Activated CD4-positive, alpha-beta T cell treated with anti-CD3 and anti-CD28 coated beads, Interleukin-2, amount 10 ng/mL, durations not matched to agents 24 days and 14 days (primary cell): ENCODE measurements at regions of chr16 and their contacts with region 1.

Region 1: GRCh38 chr16:3787924-3788661 is 70.8 kb upstream of the TRAP1 start:
- DNase-seq: no peak
- H3K4me3 Mint-ChIP-seq: no peak overlapping the region
- H3K27ac Mint-ChIP-seq: no peak overlapping the region
- H3K4me1 Mint-ChIP-seq: peaks cover 33% of the 10 kb centered on the region
- H3K27me3 Mint-ChIP-seq: peaks cover 11% of the 10 kb centered on the region

Region 2: DNA sequence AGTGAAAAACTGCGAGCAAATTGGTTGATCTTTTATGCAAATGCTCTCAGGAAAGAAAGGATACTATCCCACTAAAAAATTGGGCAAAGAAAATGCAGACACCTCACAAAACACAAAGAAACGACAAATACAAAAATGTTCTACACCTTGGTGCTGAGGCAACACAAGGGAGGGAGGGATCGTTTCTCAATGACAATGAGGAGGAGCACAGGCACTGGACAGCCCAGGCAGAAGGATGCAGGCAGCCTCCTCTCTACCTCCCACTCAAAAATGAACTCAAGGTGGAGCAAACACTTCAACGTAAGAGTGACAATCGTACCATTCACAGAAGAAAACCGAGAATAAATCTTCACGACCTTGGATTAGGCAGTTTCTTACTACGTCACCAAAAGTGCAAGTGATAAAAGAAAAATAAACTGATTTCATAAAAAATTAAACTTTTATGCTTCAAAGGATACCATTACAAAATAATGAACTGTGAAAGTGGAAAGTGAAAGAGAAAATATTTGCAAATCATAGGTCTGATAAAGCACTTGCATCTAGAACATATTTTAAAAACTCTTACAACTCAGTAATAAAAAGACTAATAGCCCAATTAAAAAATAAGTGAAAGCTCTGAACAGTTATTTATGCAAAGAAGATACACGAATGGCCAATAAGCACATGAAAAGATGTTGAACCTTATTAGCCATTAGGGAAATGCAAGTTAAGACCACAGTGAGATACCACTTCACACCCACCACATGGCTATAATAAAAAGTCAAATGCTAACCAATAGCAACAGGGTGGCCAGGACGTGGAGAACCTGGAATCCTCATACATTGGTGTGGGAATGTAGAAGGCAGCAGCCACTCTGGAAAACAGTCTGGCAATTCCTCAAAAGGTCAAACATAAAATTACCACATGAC is 10.1 kb after region 1 on chr16:
- intact Hi-C with region 1: loop called (anchors 1 kb)
- DNase-seq: peak; percentile 63
- H3K4me3 Mint-ChIP-seq: peak overlapping the region; percentile 62
- H3K27ac Mint-ChIP-seq: no peak overlapping the region
- H3K4me1 Mint-ChIP-seq: peaks cover 43% of the 10 kb centered on the region
- H3K27me3 Mint-ChIP-seq: peaks cover 2% of the 10 kb centered on the region

Region 3: DNA sequence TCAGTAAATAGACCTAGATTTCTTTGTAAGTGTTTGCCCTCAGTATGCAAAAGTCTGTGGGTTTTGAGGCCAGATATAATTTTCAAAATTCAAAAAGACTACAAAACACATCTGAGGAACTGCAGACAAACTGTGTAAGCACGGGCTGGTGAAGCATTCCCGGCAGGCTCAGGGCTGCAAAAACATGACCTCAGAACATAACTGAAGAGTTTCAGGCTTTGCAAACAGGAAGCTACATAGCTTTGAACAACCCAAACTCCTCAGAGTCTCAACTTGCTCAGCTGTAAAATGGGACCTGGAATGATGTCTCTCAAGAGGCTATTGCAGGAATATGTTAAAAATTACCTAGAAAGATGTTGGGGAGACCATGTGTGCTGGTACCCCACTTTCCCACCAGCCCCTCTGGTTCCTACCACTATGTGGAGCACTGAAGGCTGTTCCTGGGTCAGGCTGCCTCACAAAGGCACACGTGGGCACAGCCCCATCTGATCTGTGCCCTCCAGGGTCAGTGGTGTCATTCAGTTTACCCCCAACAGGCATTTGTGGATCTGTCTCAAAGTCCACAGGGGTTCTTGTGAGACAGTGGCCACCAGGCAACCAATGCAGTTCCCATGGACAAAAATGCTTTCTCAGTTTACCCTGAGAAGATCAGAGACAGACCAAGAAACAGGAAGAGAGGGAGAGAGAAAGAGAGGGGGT is 19.5 kb after region 1 on chr16:
- intact Hi-C with region 1: loop called (anchors 2 kb)
- DNase-seq: peak; percentile 74
- H3K4me3 Mint-ChIP-seq: peak overlapping the region; percentile 75
- H3K27ac Mint-ChIP-seq: peak overlapping the region; percentile 80
- H3K4me1 Mint-ChIP-seq: peaks cover 72% of the 10 kb centered on the region
- H3K27me3 Mint-ChIP-seq: no peaks in the 10 kb centered on the region

Region 4: GRCh38 chr16:3819746-3820724 is 31.9 kb after region 1 on chr16:
- intact Hi-C with region 1: loop called (anchors 5 kb)
- DNase-seq: peak; percentile 69
- H3K4me3 Mint-ChIP-seq: peak overlapping the region; percentile 55
- H3K27ac Mint-ChIP-seq: no peak overlapping the region
- H3K4me1 Mint-ChIP-seq: peaks cover 67% of the 10 kb centered on the region
- H3K27me3 Mint-ChIP-seq: no peaks in the 10 kb centered on the region

Region 5: GRCh38 chr16:3880623-3881498 is 92.8 kb after region 1 on chr16 and contains the start of gene CREBBP:
- intact Hi-C with region 1: loop called (anchors 2 kb)
- DNase-seq: peak; percentile 97
- H3K4me3 Mint-ChIP-seq: peak within 1 kb of the TSS; percentile 84
- H3K27ac Mint-ChIP-seq: peak within 1 kb of the TSS; percentile 90
- H3K4me1 Mint-ChIP-seq: peaks cover 39% of the 10 kb centered on the region
- H3K27me3 Mint-ChIP-seq: peaks cover 11% of the 10 kb centered on the region
- total RNA-seq, gene CREBBP: 42.3 and 45.3 TPM in 2 replicates

Region 6: GRCh38 chr16:5077304-5077703 is 1289.2 kb after region 1 on chr16:
- intact Hi-C with region 1: no loop called
- DNase-seq: no peak
- H3K4me3 Mint-ChIP-seq: no peak overlapping the region
- H3K27ac Mint-ChIP-seq: no peak overlapping the region
- H3K4me1 Mint-ChIP-seq: peaks cover 11% of the 10 kb centered on the region
- H3K27me3 Mint-ChIP-seq: no peaks in the 10 kb centered on the region